WTC11 (cell line): ENCODE measurements at regions of chr7 and their contacts with region 1.

Region 1: DNA sequence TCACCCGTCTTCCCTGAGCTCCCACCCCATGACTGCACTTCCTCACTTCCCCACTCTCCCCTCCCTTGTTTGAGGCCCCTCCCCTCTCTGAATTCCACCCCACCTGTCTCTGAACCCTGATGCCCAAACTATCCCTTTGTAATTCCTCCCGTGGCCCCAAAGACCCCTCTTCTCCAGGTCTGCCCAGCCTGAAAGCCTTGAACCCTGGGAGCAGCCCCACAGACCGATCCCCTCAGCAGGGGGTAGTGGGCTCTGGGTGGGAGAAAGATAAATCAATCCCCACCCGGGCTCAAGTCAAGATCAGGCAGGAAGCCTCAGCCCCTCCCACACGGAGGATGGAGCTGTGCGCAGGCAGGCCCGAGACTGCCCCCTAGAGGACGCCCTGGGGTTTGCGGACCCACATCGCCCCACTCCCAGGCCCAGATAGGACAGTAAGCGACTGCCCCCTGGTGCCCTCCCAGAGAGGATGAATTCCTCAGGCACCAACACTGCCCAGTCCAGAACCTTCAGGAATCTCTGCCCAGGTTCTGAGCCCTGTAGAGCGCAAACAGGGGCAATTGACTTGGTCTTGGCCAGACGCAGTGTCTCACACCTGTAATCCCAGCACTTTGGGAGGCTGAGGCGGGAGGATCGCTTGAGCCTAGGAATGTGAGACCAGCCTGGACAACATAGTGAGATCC is 11.7 kb downstream of the HSPB1 start:
- DNase-seq: peak; percentile 99
- ATAC-seq: peak; percentile 60
- H3K4me3 Mint-ChIP-seq: peak overlapping the region; percentile 69
- H3K27ac Mint-ChIP-seq: no peak overlapping the region
- H3K4me1 Mint-ChIP-seq: peaks cover 23% of the 10 kb centered on the region
- H3K27me3 Mint-ChIP-seq: no peaks in the 10 kb centered on the region
- CTCF ChIP-seq: peak; percentile 98

Region 2: DNA sequence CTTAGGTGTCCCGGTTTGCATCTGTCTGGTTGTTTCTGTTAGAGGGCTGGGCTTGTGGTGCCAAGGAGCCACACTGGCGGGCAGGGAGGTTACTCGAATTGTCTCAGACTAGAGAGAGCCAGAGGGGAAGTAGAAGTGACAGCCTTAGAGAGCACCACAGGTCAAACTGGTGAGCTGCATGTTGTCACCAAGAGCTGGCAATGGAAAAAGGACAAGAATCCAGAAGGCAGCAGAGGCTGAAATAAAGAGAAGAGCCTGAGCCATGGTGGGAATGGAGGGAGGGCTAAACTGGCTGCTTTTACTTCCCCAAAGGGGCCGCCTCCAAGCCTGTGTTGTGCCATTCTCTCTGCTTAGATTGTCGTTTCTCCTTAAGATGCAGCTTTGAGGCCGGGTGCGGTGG is 466.5 kb before region 1 on chr7:
- CTCF ChIA-PET with region 1: no interaction called
- POLR2A ChIA-PET with region 1: no interaction called
- DNase-seq: no peak
- ATAC-seq: no peak
- H3K4me3 Mint-ChIP-seq: no peak overlapping the region
- H3K27ac Mint-ChIP-seq: no peak overlapping the region
- H3K4me1 Mint-ChIP-seq: no peaks in the 10 kb centered on the region
- H3K27me3 Mint-ChIP-seq: no peaks in the 10 kb centered on the region; the same call in 1 of the 2 replicates
- CTCF ChIP-seq: no peak

Region 3: GRCh38 chr7:76069238-76069638 is 244.9 kb before region 1 on chr7:
- CTCF ChIA-PET with region 1: interaction called, 21 read pairs
- POLR2A ChIA-PET with region 1: interaction called, 4 read pairs
- DNase-seq: peak; percentile 43
- ATAC-seq: peak; percentile 64
- H3K4me3 Mint-ChIP-seq: no peak overlapping the region
- H3K27ac Mint-ChIP-seq: peak overlapping the region; percentile 57; the same call in 1 of the 2 replicates
- H3K4me1 Mint-ChIP-seq: peaks cover 3% of the 10 kb centered on the region; the same call in 1 of the 2 replicates
- H3K27me3 Mint-ChIP-seq: no peaks in the 10 kb centered on the region
- CTCF ChIP-seq: no peak

Region 4: GRCh38 chr7:76149847-76150691 is 164.1 kb before region 1 on chr7:
- CTCF ChIA-PET with region 1: no interaction called
- POLR2A ChIA-PET with region 1: no interaction called
- DNase-seq: no peak
- ATAC-seq: peak; percentile 36
- H3K4me3 Mint-ChIP-seq: no peak overlapping the region
- H3K27ac Mint-ChIP-seq: peak overlapping the region; percentile 63; the same call in 1 of the 2 replicates
- H3K4me1 Mint-ChIP-seq: peaks cover 9% of the 10 kb centered on the region
- H3K27me3 Mint-ChIP-seq: no peaks in the 10 kb centered on the region
- CTCF ChIP-seq: no peak

Region 5: GRCh38 chr7:76179686-76180085 is 134.5 kb before region 1 on chr7:
- CTCF ChIA-PET with region 1: interaction called, 35 read pairs
- POLR2A ChIA-PET with region 1: interaction called, 3 read pairs
- DNase-seq: no peak
- ATAC-seq: no peak
- H3K4me3 Mint-ChIP-seq: no peak overlapping the region
- H3K27ac Mint-ChIP-seq: no peak overlapping the region
- H3K4me1 Mint-ChIP-seq: peaks cover 5% of the 10 kb centered on the region; the same call in 1 of the 2 replicates
- H3K27me3 Mint-ChIP-seq: no peaks in the 10 kb centered on the region; the same call in none of the 2 replicates
- CTCF ChIP-seq: no peak

Region 6: DNA sequence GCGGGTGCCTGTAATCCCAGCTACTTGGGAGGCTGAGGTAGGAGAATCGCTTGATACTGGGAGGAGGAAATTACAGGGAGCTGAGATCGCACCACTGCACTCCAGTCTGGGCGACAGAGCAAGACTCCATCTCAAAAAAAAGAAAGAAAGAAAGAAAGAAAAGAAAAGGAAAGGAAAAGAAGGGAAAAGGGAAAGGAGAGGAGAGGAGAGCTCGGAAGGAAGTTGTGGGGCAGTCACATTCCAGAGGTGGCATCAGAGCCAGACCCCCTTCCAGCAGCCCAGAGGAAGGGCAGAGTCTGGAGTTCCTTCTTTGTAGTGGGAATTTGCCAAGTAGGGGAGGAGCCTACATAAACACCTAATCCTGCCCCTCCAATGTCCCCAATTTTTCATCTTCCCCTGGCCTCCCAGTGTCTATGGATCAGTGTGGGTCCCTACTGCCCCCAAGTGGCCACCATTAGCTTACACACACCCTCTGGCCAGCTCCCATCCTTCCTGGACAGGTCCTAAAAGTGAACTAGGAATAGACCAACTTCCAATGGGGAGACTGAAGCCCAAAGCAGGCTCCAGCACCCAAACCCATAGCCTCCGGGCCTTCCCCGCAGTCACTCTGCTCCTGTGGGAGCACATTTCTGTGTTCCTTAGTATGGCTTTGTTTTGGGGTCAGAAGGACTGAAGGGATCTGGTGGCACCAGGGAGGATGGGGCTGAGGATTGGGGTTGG is 51.3 kb before region 1 on chr7:
- CTCF ChIA-PET with region 1: interaction called, 26 read pairs
- POLR2A ChIA-PET with region 1: interaction called, 4 read pairs
- DNase-seq: peak; percentile 82
- ATAC-seq: peak; percentile 50
- H3K4me3 Mint-ChIP-seq: no peak overlapping the region
- H3K27ac Mint-ChIP-seq: peak overlapping the region; percentile 79; the same call in 1 of the 2 replicates
- H3K4me1 Mint-ChIP-seq: peaks cover 32% of the 10 kb centered on the region
- H3K27me3 Mint-ChIP-seq: no peaks in the 10 kb centered on the region; the same call in 1 of the 2 replicates
- CTCF ChIP-seq: peak; percentile 77

Region 7: DNA sequence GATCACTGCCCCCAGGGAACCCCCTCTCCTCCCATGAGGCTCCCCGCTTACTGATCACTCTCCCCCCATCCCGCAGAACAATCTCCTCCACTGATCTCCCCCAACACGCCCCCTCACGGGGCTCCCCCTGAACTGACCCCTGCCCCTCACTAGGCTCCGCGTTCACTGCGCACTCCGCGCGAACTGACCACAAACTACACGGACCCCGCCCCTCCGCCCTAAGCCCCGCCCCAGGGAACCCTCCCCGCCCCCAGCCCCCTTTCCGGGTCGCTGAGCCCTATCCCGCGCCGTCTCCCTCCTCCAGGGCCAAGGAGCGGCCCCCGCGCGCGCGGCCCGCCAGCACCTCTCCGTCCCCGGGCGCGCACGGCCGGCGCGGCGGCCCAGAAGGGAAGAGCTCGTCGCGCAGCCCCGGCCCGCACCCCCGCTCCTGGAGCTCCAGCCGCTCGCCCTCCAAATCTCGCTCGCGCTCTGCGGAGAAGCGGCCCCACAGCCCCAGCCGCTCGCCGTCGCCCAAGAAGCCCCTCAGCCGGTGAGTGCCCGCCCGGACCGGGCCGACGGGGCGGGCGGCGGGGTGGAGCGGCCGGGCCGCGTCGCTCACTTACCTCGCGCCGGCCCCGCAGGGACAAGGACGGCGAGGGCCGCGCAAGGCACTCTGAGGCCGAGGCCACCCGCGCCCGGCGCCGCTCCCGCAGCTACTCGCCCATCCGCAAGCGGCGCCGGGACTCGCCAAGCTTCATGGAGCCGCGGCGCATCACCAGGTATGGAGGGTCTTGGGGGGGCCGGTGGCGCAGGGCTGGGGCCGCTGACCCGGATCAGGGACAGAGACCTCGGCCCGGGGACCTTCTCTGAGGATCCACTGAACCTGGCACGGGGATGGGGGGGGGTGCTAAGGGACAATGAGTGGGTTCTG is 31.6 kb before region 1 on chr7:
- CTCF ChIA-PET with region 1: interaction called, 35 read pairs
- POLR2A ChIA-PET with region 1: interaction called, 8 read pairs
- DNase-seq: peak; percentile 71
- ATAC-seq: peak; percentile 66
- H3K4me3 Mint-ChIP-seq: peak overlapping the region; percentile 83
- H3K27ac Mint-ChIP-seq: no peak overlapping the region
- H3K4me1 Mint-ChIP-seq: peaks cover 19% of the 10 kb centered on the region
- H3K27me3 Mint-ChIP-seq: peaks cover 57% of the 10 kb centered on the region
- CTCF ChIP-seq: no peak

Region 8: DNA sequence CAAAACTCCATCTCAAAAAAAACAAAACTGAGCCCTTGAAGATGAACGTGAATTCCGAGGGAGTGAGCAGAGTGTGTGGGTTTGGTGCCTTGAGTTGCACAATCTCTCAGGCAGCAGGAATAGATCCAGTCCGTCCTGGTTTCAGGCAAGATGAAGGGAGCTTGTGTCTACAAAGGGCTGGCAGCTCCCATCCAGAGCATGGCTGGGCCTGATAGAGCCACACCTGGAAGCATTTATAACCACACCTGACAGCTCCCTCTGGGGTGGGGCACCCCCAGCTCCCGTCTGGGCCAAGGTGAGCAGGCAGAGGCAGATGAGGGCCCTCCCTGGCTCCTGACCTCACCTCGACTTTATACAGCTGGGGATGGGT is 16.8 kb before region 1 on chr7:
- CTCF ChIA-PET with region 1: interaction called, 90 read pairs
- POLR2A ChIA-PET with region 1: interaction called, 8 read pairs
- DNase-seq: no peak
- ATAC-seq: no peak
- H3K4me3 Mint-ChIP-seq: no peak overlapping the region
- H3K27ac Mint-ChIP-seq: peak overlapping the region; percentile 27; the same call in 1 of the 2 replicates
- H3K4me1 Mint-ChIP-seq: peaks cover 18% of the 10 kb centered on the region
- H3K27me3 Mint-ChIP-seq: peaks cover 25% of the 10 kb centered on the region
- CTCF ChIP-seq: no peak

Region 9: GRCh38 chr7:76359111-76359978 is 45.2 kb after region 1 on chr7:
- CTCF ChIA-PET with region 1: interaction called, 4 read pairs
- POLR2A ChIA-PET with region 1: interaction called, 17 read pairs
- DNase-seq: peak; percentile 96
- ATAC-seq: peak; percentile 95
- H3K4me3 Mint-ChIP-seq: peak overlapping the region; percentile 73
- H3K27ac Mint-ChIP-seq: peak overlapping the region; percentile 95
- H3K4me1 Mint-ChIP-seq: peaks cover 43% of the 10 kb centered on the region
- H3K27me3 Mint-ChIP-seq: no peaks in the 10 kb centered on the region; the same call in 1 of the 2 replicates
- CTCF ChIP-seq: peak; percentile 33; the same call in 1 of the 2 replicates